HepG2 (cell line): ENCODE measurements at regions of chr9 and their contacts with region 1.

Region 1: GRCh38 chr9:113807173-113808061 is 68.7 kb upstream of the ZNF618 start:
- DNase-seq: peak; percentile 19
- ATAC-seq: peak; percentile 65
- H3K4me3 ChIP-seq: no peak overlapping the region
- H3K27ac ChIP-seq: no peak overlapping the region
- H3K4me1 ChIP-seq: no peaks in the 10 kb centered on the region
- H3K27me3 ChIP-seq: 0 out of 5 replicates have a peak, but pooled peaks cover 0 to 12% of the 10 kb centered on the region in 2 experiments
- CTCF ChIP-seq: peak; percentile 82
- EP300 ChIP-seq: no peak
- POLR2A ChIP-seq: no peak
- RAD21 ChIP-seq: peak; percentile 22; the same call in 1 of the 2 replicates

Region 2: DNA sequence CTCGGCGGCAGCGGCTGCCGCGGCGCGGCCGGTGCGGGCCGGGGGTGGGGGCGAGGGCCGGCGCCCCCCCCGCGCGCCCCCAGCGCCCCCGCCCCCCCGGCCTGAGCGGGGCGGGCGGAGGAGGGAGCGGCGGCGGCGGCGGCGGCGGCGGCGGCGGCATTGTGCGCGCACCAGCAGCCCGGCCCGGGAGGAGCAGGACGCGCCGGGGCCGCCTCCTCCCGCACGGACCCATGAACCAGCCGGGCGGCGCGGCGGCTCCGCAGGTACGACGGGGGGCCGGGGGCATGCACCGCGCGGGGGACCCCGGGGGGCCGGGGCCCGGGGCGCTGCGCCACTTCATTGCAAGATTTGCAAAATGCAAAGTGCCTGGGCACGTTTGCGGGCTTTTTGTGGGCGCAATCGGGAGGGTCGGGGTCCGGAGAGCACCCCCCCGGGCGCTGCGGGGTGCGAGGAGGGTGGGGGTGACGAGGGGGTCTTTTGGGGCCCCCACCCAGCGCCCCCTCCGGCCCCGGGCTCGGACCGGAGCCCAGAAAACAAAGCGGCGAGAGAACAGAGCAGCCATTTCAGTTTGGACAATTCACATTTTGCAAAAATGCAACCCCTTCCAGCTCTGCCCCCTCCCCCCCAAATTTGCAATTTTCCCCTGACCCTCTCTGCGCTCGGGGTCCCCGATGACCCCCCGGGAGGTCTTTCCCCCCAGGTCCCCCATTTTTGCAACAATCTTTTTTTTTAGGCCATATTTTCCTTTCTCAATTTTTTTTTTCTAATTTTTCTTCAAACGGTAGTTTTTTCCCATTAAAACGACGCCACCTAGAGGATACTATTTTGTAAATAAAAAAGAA is 69.0 kb after region 1 on chr9 and contains the start of gene ZNF618:
- CTCF ChIA-PET with region 1: no interaction called
- POLR2A ChIA-PET with region 1: no interaction called
- in situ Hi-C with region 1: no loop called
- intact Hi-C with region 1: loop called (anchors 2 kb)
- DNase-seq: no peak
- ATAC-seq: peak; percentile 85
- H3K4me3 ChIP-seq: peak within 1 kb of the TSS; percentile 66 to 71 (median 69)
- H3K27ac ChIP-seq: no peak within 1 kb of the TSS
- H3K4me1 ChIP-seq: no peaks in the 10 kb centered on the region
- H3K27me3 ChIP-seq: peaks cover 0 to 30% of the 10 kb centered on the region in 2 experiments; a peak in 3 of 5 replicates
- CTCF ChIP-seq: no peak
- EP300 ChIP-seq: no peak
- POLR2A ChIP-seq: no peak
- RAD21 ChIP-seq: no peak
- total RNA-seq, gene ZNF618: 0.06 and 0.07 TPM in 2 replicates